CD8-positive, alpha-beta memory T cell (primary cell): ENCODE measurements at regions of chr1 and their contacts with region 1.

Region 1: DNA sequence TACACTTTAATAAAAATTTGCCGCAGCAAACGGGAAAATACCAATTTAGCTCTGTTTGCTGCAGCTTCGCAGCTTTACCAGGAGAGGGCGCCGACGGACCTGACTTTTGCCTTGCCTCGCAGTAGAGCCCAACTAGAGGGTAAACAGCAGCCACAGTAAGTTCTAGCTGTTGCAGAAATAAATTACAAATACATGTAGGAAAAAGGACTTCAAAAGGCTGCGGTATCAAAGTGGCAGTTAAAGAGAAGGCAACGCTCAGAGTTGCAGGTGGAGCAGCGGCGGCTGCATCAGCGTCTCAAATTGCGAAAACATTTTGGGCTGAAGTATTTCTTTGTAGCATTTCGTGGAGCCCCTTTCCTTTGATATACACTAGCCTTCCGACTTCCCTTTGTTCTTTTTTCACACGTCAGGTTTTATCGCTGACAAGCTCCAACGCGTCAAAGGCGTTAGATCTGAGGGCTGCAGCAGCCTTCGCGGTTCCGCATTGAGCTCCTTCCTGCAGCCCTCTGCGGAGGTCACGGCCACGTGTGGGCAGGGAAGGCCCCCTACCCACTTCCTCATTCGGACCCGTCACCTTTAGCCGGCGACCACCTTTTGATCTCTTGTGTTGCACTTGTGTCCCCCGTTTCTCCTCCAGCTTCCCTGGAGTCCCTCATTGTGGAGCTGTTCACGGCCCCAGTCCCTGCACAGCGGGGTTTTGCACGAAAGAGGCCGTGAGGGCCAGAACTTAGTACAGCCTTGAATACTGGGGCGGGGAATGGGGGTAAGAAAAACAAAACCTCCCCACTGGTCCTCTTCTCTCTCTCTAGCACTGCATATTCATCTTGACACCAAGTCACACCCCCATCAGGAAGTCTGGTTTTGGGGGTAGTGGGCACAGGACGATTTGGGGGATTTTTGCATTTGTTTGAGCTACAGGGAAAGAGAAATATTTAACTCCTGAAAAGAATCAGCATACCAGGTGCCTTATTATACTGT is 72.8 kb downstream of the S1PR1 start:
- DNase-seq: peak; percentile 60 to 91 (median 87)
- H3K4me3 ChIP-seq: peak overlapping the region; percentile 56
- H3K4me3 Mint-ChIP-seq: peak overlapping the region; percentile 48 to 89 (median 82)
- H3K27ac ChIP-seq: peak overlapping the region; percentile 63
- H3K27ac Mint-ChIP-seq: peak overlapping the region; percentile 87 to 99 (median 98)
- H3K4me1 ChIP-seq: peaks cover 62% of the 10 kb centered on the region
- H3K4me1 Mint-ChIP-seq: peaks cover 73 to 80% (median 79%) of the 10 kb centered on the region in 3 donors
- H3K27me3 ChIP-seq: no peaks in the 10 kb centered on the region
- H3K27me3 Mint-ChIP-seq: no peaks in the 10 kb centered on the region

Region 2: DNA sequence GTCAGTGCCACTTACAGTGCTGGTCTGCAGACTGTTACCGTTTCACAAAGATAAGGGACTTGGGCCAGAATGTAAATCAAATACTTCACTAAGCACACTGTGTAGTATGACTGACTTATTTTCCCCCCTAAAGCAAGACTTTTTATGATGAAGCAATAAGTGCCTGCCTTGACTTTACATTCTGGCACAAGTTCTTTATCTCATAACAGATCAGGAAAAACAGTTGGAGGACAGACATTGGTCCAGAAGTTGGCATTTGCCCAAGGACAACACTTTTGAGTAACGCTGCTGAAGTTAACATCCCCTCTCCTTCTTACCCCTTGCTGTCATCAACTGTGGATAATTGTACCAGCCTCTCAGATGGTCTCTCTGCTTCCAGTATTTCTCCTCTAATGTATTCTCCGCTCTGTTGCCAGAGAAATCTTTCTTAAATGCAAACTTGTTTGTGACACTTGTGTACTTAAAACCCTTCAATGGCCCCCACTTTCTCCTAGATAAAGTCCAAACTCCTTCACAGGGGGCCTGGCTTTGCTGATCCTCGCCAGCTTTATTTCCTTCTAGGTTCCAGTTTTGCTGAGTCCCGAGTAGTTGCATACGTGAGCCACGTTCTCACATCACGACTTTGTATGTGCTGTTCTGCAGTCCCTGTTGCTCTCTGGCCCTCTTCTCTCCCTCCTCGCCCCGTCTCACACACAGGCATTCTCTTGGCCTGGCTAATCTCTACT is 27.1 kb before region 1 on chr1:
- CTCF ChIA-PET with region 1: interaction called, 48 read pairs
- POLR2A ChIA-PET with region 1: no interaction called
- DNase-seq: no peak
- H3K4me3 ChIP-seq: no peak overlapping the region
- H3K4me3 Mint-ChIP-seq: peak overlapping the region; percentile 3 to 82 (median 34)
- H3K27ac ChIP-seq: no peak overlapping the region
- H3K27ac Mint-ChIP-seq: peak overlapping the region; percentile 83 to 99 (median 96)
- H3K4me1 ChIP-seq: peaks cover 95% of the 10 kb centered on the region
- H3K4me1 Mint-ChIP-seq: peaks cover 92 to 96% (median 95%) of the 10 kb centered on the region in 3 donors
- H3K27me3 ChIP-seq: no peaks in the 10 kb centered on the region
- H3K27me3 Mint-ChIP-seq: no peaks in the 10 kb centered on the region

Region 3: DNA sequence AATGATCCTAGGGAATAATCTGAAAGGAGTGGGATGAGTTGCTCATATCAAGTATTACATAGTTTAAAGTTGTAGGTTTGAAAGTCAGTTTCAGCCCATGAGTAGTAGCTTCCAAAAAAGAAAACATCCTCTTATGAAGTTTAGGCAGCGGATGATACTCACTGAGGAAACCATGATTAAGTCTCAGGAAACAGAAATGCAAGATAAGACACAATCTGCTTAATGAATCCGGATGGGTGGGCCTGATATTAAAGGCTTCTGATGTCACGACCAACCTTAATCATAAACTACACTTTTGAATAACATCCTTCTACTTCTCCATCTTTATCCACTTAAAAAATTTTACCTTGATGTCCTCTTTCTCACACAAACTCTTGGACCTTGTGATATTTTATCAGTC is 11.0 kb before region 1 on chr1:
- CTCF ChIA-PET with region 1: interaction called, 27 read pairs
- POLR2A ChIA-PET with region 1: no interaction called
- DNase-seq: no peak
- H3K4me3 ChIP-seq: no peak overlapping the region
- H3K4me3 Mint-ChIP-seq: no peak overlapping the region
- H3K27ac ChIP-seq: no peak overlapping the region
- H3K27ac Mint-ChIP-seq: peak overlapping the region in 4 of 8 donors; percentile 3 to 90 (median 11)
- H3K4me1 ChIP-seq: peaks cover 2% of the 10 kb centered on the region
- H3K4me1 Mint-ChIP-seq: peaks cover 13 to 48% (median 30%) of the 10 kb centered on the region in 3 donors
- H3K27me3 ChIP-seq: no peaks in the 10 kb centered on the region
- H3K27me3 Mint-ChIP-seq: peaks cover 1 to 3% of the 10 kb centered on the region in 2 donors

Region 4: DNA sequence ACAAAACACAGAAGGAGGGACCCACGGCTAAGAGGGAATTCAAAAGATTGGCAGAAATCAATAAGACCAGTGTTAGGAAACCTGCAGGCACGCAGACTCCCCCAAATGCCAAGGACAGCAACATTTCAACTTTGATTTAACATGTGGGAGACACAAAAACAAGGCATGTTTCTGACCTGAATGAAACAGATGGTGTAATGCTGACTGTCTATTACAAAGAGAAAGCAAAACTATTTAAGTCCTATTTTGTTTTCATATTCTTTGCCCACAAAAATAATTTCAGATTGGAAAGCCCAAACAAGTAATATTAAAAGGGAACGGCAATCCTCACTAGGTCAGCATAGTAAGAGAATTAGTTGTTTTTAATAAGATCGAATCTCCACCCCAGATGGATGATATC is 35.1 kb after region 1 on chr1:
- CTCF ChIA-PET with region 1: interaction called, 30 read pairs
- POLR2A ChIA-PET with region 1: interaction called, 3 read pairs
- DNase-seq: no peak
- H3K4me3 ChIP-seq: no peak overlapping the region
- H3K4me3 Mint-ChIP-seq: peak overlapping the region in 4 of 7 donors; percentile 6 to 44 (median 21)
- H3K27ac ChIP-seq: no peak overlapping the region
- H3K27ac Mint-ChIP-seq: peak overlapping the region in 5 of 8 donors; percentile 8 to 72 (median 43)
- H3K4me1 ChIP-seq: peaks cover 10% of the 10 kb centered on the region
- H3K4me1 Mint-ChIP-seq: peaks cover 34 to 61% (median 45%) of the 10 kb centered on the region in 3 donors
- H3K27me3 ChIP-seq: no peaks in the 10 kb centered on the region
- H3K27me3 Mint-ChIP-seq: no peaks in the 10 kb centered on the region

Region 5: GRCh38 chr1:101357444-101357986 is 47.9 kb after region 1 on chr1:
- CTCF ChIA-PET with region 1: interaction called, 143 read pairs
- POLR2A ChIA-PET with region 1: interaction called, 20 read pairs
- DNase-seq: peak; percentile 40 to 86 (median 74)
- H3K4me3 ChIP-seq: no peak overlapping the region
- H3K4me3 Mint-ChIP-seq: peak overlapping the region in 2 of 7 donors; percentile 13 to 74
- H3K27ac ChIP-seq: no peak overlapping the region
- H3K27ac Mint-ChIP-seq: peak overlapping the region in 7 of 8 donors; percentile 40 to 96 (median 72)
- H3K4me1 ChIP-seq: peaks cover 10% of the 10 kb centered on the region
- H3K4me1 Mint-ChIP-seq: peaks cover 10 to 17% (median 11%) of the 10 kb centered on the region in 3 donors
- H3K27me3 ChIP-seq: no peaks in the 10 kb centered on the region
- H3K27me3 Mint-ChIP-seq: peaks cover 0 to 3% of the 10 kb centered on the region in 2 donors

Region 6: DNA sequence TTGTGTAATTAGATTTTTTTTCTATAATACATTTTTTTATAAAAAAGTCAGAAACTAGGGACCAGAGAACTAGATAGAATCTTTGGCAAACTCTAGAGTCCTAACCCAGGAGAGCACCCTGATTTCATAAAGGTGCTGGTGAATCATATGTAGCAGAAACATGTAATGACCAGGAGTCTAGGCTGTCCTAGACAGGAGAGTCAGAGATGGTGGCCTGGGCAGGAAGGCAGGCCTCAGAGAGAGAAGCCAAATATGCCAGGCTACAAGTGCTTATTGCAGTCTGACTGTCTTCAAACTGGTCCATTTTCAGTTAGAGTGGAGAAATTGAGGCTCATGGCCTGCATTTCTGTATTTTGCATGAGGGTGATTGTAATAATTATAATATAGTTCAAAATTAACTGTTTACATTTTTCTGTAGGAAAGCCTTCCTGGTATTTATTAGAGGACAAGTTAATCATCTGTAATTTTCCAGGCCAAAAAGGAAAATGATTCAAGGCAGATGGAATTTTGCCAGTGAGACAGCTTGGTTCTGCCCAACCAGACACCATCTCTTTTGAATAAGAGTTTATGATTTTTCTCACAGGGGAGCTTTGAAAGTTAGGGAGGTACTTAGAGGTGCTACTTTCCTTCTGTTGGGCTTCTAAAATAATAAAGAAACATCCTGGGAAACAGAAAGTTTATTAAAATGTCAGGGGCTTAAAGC is 57.0 kb after region 1 on chr1:
- CTCF ChIA-PET with region 1: interaction called, 13 read pairs
- POLR2A ChIA-PET with region 1: no interaction called
- DNase-seq: no peak
- H3K4me3 ChIP-seq: no peak overlapping the region
- H3K4me3 Mint-ChIP-seq: no peak overlapping the region
- H3K27ac ChIP-seq: no peak overlapping the region
- H3K27ac Mint-ChIP-seq: peak overlapping the region in 1 of 8 donors; percentile 21
- H3K4me1 ChIP-seq: peaks cover 5% of the 10 kb centered on the region
- H3K4me1 Mint-ChIP-seq: peaks cover 0 to 13% (median 9%) of the 10 kb centered on the region in 3 donors
- H3K27me3 ChIP-seq: no peaks in the 10 kb centered on the region
- H3K27me3 Mint-ChIP-seq: peaks cover 0 to 1% of the 10 kb centered on the region in 2 donors

Region 7: GRCh38 chr1:101706366-101706765 is 396.7 kb after region 1 on chr1:
- CTCF ChIA-PET with region 1: no interaction called
- POLR2A ChIA-PET with region 1: no interaction called
- DNase-seq: no peak
- H3K4me3 ChIP-seq: no peak overlapping the region
- H3K4me3 Mint-ChIP-seq: no peak overlapping the region
- H3K27ac ChIP-seq: no peak overlapping the region
- H3K27ac Mint-ChIP-seq: no peak overlapping the region
- H3K4me1 ChIP-seq: no peaks in the 10 kb centered on the region
- H3K4me1 Mint-ChIP-seq: no peaks in the 10 kb centered on the region
- H3K27me3 ChIP-seq: no peaks in the 10 kb centered on the region
- H3K27me3 Mint-ChIP-seq: peaks cover 0 to 1% of the 10 kb centered on the region in 2 donors